ENCODE measurements at regions of chr16 and their contacts with region 1.

Region 1: DNA sequence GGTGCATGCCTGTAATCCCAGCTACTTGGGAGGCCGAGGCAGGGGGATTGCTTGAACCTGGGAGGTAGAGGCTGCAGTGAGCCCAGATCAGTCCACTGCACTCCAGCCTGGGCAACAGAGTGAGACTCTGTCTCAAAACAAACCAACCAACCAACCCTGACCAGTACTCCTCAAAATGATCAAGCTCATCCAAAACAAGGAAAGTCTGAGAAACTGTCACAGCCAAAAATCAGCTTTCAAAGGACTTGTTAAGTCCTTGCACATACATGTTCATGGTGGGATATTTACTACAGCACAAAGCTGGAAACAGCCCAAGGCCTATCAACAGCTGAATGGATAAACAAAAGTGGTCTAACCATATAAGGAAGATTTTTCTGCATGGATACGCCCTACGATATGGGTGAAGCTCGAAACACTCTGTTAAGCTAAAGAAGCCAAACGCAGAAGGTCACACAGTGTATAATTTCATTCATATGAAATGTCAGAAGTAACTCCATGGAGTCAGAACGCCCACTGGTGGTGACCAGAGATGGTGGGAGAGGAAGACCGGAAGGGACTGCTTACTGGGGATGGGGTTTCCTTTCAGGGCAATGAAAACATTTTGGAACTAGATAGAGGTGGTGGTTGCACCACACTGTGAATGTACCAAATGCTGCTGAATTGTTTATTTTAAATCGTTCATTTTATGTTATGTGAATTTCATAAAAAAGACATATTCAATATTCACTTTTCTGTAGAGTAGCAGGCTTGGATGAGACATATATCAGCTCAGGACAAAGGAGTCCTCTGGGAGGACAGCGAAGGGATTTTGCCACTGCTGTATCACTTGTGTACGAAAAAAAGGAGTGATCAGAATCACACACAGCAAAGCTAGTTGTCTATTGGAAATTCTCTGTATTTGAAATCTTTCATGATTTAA is 17.7 kb downstream of the CCL17 start:
- DNase-seq: no peak
- ATAC-seq: peak; percentile 48
- H3K4me3 ChIP-seq: no peak overlapping the region
- H3K27ac ChIP-seq: no peak overlapping the region
- H3K4me1 ChIP-seq: peaks cover 15 to 23% of the 10 kb centered on the region in 2 experiments; a peak in 3 of 4 replicates
- H3K27me3 ChIP-seq: no peaks in the 10 kb centered on the region
- CTCF ChIP-seq: peak; percentile 65 to 75 (median 74)
- POLR2A ChIP-seq: no peak
- RAD21 ChIP-seq: peak; percentile 82

Region 2: DNA sequence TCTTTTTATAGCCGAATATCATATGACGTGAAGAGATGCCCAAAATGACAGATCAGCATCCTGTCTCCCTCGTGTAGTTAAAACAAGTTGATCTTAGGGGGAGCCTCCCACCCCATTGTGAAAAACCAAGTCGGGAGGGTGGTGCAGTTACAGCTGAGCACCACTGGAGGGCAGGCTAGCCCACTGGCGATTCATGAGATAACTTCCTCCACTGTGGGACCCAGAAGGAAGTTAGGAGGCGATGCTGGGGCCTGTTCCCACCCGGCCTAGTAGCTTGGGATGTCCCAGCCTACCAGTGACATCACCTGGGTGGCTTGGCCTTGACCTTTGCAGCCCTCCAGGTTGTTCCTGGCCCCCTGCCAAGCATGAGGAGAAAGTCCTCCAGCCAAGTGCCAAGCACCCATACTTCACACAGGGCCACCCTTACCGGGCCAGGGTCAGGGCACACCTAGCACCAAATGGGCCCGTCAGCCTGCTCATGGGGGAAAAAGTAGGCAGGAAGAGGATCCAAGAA is 338.0 kb before region 1 on chr16:
- CTCF ChIA-PET with region 1: interaction called, 3 read pairs
- POLR2A ChIA-PET with region 1: no interaction called
- RAD21 ChIA-PET with region 1: interaction called in 1 of 2 experiments, 3 read pairs
- intact Hi-C with region 1: loop called (anchors 1 kb)
- DNase-seq: peak; percentile 63
- ATAC-seq: peak; percentile 90
- H3K4me3 ChIP-seq: no peak overlapping the region
- H3K27ac ChIP-seq: no peak overlapping the region
- H3K4me1 ChIP-seq: no peaks in the 10 kb centered on the region
- H3K27me3 ChIP-seq: no peaks in the 10 kb centered on the region
- CTCF ChIP-seq: peak; percentile 89 to 98 (median 98)
- POLR2A ChIP-seq: no peak
- RAD21 ChIP-seq: peak; percentile 92

Region 3: DNA sequence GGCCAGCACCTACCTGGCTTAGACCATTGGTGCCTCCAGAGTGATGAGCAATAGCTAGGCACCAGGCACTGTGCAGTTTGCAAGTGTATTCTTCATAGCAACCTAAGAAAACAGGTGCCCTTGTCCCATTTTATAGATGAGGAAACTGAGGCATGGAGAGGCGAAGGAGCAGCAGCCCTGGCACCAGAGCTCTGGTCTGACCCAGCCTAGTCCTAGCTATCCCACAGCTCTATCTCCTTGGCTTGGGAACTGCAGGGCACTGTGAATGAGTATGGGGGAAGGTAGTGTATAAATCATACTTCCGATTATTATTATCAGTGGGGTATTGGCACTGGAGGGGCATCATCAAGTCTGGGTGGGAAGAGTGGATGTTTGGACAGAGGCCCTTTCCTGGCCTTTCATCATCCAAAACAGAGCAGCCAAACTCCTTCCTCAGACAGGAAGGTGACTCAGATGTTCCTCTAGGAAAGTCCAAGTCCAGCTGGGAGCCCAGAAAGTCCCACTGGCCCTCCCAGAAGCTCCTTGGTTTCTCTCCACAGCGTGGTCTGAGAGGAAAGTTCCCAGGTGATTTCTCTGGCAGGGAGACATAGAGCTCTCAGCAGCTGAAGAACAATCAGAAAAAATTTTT is 105.8 kb before region 1 on chr16:
- CTCF ChIA-PET with region 1: interaction called, 11 read pairs
- POLR2A ChIA-PET with region 1: interaction called, 3 read pairs
- RAD21 ChIA-PET with region 1: no interaction called
- intact Hi-C with region 1: no loop called
- DNase-seq: peak; percentile 75
- ATAC-seq: peak; percentile 30; the same call in 1 of the 2 replicates
- H3K4me3 ChIP-seq: no peak overlapping the region
- H3K27ac ChIP-seq: peak overlapping the region; percentile 2; the same call in 1 of the 2 replicates
- H3K4me1 ChIP-seq: peaks cover 5 to 14% of the 10 kb centered on the region in 2 experiments; a peak in 3 of 4 replicates
- H3K27me3 ChIP-seq: no peaks in the 10 kb centered on the region; the same call in 1 of the 2 replicates
- CTCF ChIP-seq: no peak
- POLR2A ChIP-seq: no peak
- RAD21 ChIP-seq: no peak

Region 4: DNA sequence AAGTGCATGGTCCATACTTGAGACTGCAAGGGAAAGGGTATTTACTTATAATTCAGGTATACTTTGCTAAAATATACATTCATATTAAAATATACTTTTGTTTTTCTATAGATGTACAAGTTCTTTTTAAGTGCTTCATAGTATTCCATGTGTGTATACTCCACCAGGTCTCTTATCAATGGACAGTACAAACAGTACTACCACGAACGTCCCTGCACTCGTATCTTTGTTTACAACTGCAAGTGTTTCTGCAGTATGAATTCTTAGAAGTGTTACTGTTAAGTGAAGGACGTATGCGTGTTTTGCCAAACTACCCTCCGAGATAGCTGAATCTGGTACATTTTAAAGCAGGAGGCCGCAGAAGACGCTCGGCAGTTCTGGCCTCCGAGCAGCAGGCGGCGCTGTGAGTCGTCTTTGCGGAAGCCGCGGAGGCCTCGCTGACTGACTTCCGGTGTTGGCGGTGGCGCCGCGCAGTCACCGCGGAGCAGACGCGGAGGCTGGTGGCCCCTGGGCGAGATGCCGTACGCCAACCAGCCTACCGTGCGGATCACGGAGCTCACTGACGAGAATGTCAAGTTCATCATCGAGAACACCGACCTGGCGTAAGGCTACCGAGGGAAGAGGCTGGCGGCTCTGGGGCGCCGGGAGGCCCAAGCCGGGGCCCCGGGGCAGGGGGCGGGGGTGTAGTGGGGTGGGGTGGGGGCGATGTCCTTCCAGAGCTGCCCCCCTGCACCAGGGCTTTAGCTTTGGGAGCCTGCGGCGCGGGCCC is 40.1 kb after region 1 on chr16 and contains the start of gene POLR2C:
- CTCF ChIA-PET with region 1: interaction called, 16 read pairs
- POLR2A ChIA-PET with region 1: no interaction called
- RAD21 ChIA-PET with region 1: no interaction called
- intact Hi-C with region 1: no loop called
- DNase-seq: peak; percentile 72
- ATAC-seq: peak; percentile 94
- H3K4me3 ChIP-seq: peak within 1 kb of the TSS; percentile 82 to 94
- H3K27ac ChIP-seq: peak within 1 kb of the TSS; percentile 61
- H3K4me1 ChIP-seq: peaks cover 8 to 10% of the 10 kb centered on the region in 2 experiments; a peak in 3 of 4 replicates
- H3K27me3 ChIP-seq: no peaks in the 10 kb centered on the region
- CTCF ChIP-seq: peak; percentile 62 to 83 (median 80); a peak in 5 of 6 replicates
- POLR2A ChIP-seq: peak; percentile 92
- RAD21 ChIP-seq: no peak
- total RNA-seq, gene POLR2C: 74.4 TPM

Region 5: GRCh38 chr16:57519796-57520360 is 97.6 kb after region 1 on chr16:
- CTCF ChIA-PET with region 1: interaction called, 22 read pairs
- POLR2A ChIA-PET with region 1: interaction called, 4 read pairs
- RAD21 ChIA-PET with region 1: interaction called, 3 read pairs
- intact Hi-C with region 1: loop called (anchors 1 kb)
- DNase-seq: peak; percentile 41
- ATAC-seq: peak; percentile 98
- H3K4me3 ChIP-seq: no peak overlapping the region
- H3K27ac ChIP-seq: no peak overlapping the region
- H3K4me1 ChIP-seq: no peaks in the 10 kb centered on the region
- H3K27me3 ChIP-seq: no peaks in the 10 kb centered on the region
- CTCF ChIP-seq: peak; percentile 95 to 99 (median 98)
- POLR2A ChIP-seq: no peak
- RAD21 ChIP-seq: peak; percentile 95

Measured in HCT116 (cell line).